Activated CD4-positive, alpha-beta T cell treated with anti-CD3 and anti-CD28 coated beads for 36 hours (primary cell): ENCODE measurements at regions of chr19 and their contacts with region 1.

Region 1: GRCh38 chr19:21505459-21506451 is at the start of gene ZNF429:
- DNase-seq: peak; percentile 94
- ATAC-seq: peak; percentile 99
- H3K4me3 Mint-ChIP-seq: peak within 1 kb of the TSS; percentile 100
- H3K27ac Mint-ChIP-seq: peak within 1 kb of the TSS; percentile 99
- H3K4me1 Mint-ChIP-seq: peaks cover 38% of the 10 kb centered on the region
- H3K27me3 Mint-ChIP-seq: no peaks in the 10 kb centered on the region
- total RNA-seq, gene ZNF429: 13.3 to 15.5 TPM

Region 2: GRCh38 chr19:20039203-20039723 is 1466.5 kb before region 1 on chr19 and contains the start of gene ZNF682:
- CTCF ChIA-PET with region 1: no interaction called
- POLR2A ChIA-PET with region 1: no interaction called
- intact Hi-C with region 1: loop called in 1 of 2 experiments (anchors 10 kb)
- DNase-seq: peak; percentile 98
- ATAC-seq: peak; percentile 100
- H3K4me3 Mint-ChIP-seq: peak within 1 kb of the TSS; percentile 94
- H3K27ac Mint-ChIP-seq: peak within 1 kb of the TSS; percentile 94
- H3K4me1 Mint-ChIP-seq: peaks cover 16% of the 10 kb centered on the region
- H3K27me3 Mint-ChIP-seq: peaks cover 5% of the 10 kb centered on the region
- total RNA-seq, gene ZNF682: 6.0 to 7.5 TPM

Region 3: DNA sequence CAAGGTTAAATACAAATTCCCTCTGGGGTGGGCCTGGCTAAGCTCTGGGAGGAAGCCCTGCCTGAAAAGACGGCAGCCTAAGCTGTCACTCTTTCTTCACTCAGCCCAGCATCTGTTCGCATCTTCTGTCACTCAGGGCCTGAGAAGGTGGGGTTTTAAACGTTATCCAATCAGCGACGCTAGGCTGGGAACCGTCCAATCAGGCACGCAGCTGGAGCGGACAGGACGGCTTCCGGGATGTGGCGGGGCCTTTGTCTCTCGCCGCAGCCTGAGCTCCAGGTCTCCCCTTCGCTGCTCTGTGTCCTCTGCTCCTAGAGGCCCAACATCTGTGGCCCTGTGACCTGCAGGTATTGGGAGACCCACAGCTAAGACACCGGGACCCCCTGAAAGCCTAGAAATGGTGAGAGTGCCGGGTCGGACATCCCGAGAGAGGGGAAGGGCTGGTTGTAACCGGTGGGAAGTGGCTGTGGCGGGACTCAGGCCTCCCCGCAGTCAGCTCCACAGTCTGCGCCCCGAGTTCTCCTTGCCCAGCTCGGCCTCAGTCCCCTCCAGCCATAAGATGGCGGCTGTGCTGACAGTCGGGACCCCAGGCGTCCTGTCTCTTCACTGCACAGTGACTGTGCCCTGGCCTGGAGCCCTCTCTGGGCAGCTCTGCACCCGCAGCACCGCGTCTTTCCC is 363.8 kb before region 1 on chr19 and contains the start of gene ZNF431:
- CTCF ChIA-PET with region 1: no interaction called
- POLR2A ChIA-PET with region 1: no interaction called
- intact Hi-C with region 1: loop called in 1 of 2 experiments (anchors 1 kb)
- DNase-seq: peak; percentile 94
- ATAC-seq: peak; percentile 99
- H3K4me3 Mint-ChIP-seq: peak within 1 kb of the TSS; percentile 95
- H3K27ac Mint-ChIP-seq: peak within 1 kb of the TSS; percentile 96
- H3K4me1 Mint-ChIP-seq: peaks cover 38% of the 10 kb centered on the region
- H3K27me3 Mint-ChIP-seq: no peaks in the 10 kb centered on the region
- total RNA-seq, gene ZNF431: 16.8 to 22.2 TPM

Region 4: GRCh38 chr19:21358768-21359451 is 146.8 kb before region 1 on chr19 and contains the start of gene ZNF738:
- CTCF ChIA-PET with region 1: no interaction called
- POLR2A ChIA-PET with region 1: no interaction called
- intact Hi-C with region 1: loop called in 1 of 2 experiments (anchors 1 kb)
- DNase-seq: peak; percentile 94
- ATAC-seq: peak; percentile 98
- H3K4me3 Mint-ChIP-seq: peak within 1 kb of the TSS; percentile 99
- H3K27ac Mint-ChIP-seq: peak within 1 kb of the TSS; percentile 99
- H3K4me1 Mint-ChIP-seq: peaks cover 10% of the 10 kb centered on the region
- H3K27me3 Mint-ChIP-seq: no peaks in the 10 kb centered on the region
- total RNA-seq, gene ZNF738: 15.8 to 19.5 TPM

Region 5: GRCh38 chr19:21410166-21410565 is 95.6 kb before region 1 on chr19:
- CTCF ChIA-PET with region 1: no interaction called
- POLR2A ChIA-PET with region 1: no interaction called
- intact Hi-C with region 1: no loop called
- DNase-seq: no peak
- ATAC-seq: no peak
- H3K4me3 Mint-ChIP-seq: no peak overlapping the region
- H3K27ac Mint-ChIP-seq: no peak overlapping the region
- H3K4me1 Mint-ChIP-seq: no peaks in the 10 kb centered on the region
- H3K27me3 Mint-ChIP-seq: no peaks in the 10 kb centered on the region

Region 6: DNA sequence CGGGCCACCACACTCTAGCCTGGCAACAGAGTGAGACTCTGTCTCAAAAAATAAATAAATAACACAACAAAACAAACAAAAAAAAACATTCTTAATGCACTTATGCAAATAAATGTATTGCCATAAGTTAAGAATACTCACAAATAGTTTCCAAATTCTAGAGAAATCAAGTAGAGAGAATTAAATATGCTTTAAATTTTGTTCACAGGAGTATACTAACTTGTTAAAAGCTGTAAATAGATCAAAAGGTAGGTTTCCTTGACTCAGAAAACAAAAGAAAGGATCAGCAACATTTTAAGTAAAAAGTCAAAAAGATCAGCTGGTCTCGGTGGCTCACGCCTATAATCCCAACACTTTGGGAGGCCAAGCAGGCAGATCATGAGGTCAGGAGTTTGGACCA is 50.9 kb before region 1 on chr19:
- CTCF ChIA-PET with region 1: no interaction called
- POLR2A ChIA-PET with region 1: no interaction called
- intact Hi-C with region 1: no loop called
- DNase-seq: no peak
- ATAC-seq: no peak
- H3K4me3 Mint-ChIP-seq: no peak overlapping the region
- H3K27ac Mint-ChIP-seq: no peak overlapping the region
- H3K4me1 Mint-ChIP-seq: no peaks in the 10 kb centered on the region
- H3K27me3 Mint-ChIP-seq: no peaks in the 10 kb centered on the region

Region 7: DNA sequence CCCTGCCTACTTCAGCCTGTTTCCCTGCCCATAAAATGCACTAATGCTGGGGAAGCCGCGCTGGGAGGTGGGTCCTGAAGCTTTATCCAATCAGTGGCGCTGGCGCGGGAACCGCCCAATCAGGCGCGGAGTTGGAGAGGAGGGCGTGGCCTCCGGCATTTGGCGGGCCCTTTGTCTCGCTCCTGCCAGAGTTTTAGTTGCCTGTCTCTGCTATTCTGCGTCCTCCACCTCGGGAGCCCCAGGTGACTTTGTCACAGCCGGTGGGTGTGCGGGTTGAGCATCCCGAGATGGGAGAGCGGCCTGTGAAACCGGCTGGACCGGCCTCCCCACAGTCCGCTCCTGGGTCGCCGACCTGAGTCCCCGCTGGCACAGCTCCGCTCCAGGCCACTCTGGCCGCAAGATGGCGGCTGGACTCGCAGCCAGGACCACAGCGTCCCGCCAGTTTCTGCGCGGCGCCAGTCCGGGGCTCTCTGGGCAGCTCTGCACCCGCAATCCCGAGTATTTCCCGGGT is 31.0 kb before region 1 on chr19:
- CTCF ChIA-PET with region 1: no interaction called
- POLR2A ChIA-PET with region 1: interaction called, 6 read pairs
- intact Hi-C with region 1: loop called in 1 of 2 experiments (anchors 2 kb)
- DNase-seq: peak; percentile 93
- ATAC-seq: peak; percentile 100
- H3K4me3 Mint-ChIP-seq: peak overlapping the region; percentile 77
- H3K27ac Mint-ChIP-seq: peak overlapping the region; percentile 65
- H3K4me1 Mint-ChIP-seq: no peaks in the 10 kb centered on the region
- H3K27me3 Mint-ChIP-seq: no peaks in the 10 kb centered on the region

Region 8: GRCh38 chr19:21677696-21678418 is 172.1 kb after region 1 on chr19:
- CTCF ChIA-PET with region 1: no interaction called
- POLR2A ChIA-PET with region 1: no interaction called
- intact Hi-C with region 1: loop called in 1 of 2 experiments (anchors 5 kb)
- DNase-seq: peak; percentile 55
- ATAC-seq: peak; percentile 75
- H3K4me3 Mint-ChIP-seq: peak overlapping the region; percentile 58
- H3K27ac Mint-ChIP-seq: peak overlapping the region; percentile 67
- H3K4me1 Mint-ChIP-seq: peaks cover 5% of the 10 kb centered on the region
- H3K27me3 Mint-ChIP-seq: peaks cover 4% of the 10 kb centered on the region

Region 9: GRCh38 chr19:21812450-21812849 is 306.7 kb after region 1 on chr19:
- CTCF ChIA-PET with region 1: no interaction called
- POLR2A ChIA-PET with region 1: no interaction called
- intact Hi-C with region 1: no loop called
- DNase-seq: no peak
- ATAC-seq: no peak
- H3K4me3 Mint-ChIP-seq: no peak overlapping the region
- H3K27ac Mint-ChIP-seq: no peak overlapping the region
- H3K4me1 Mint-ChIP-seq: no peaks in the 10 kb centered on the region
- H3K27me3 Mint-ChIP-seq: no peaks in the 10 kb centered on the region

Region 10: GRCh38 chr19:21835810-21836444 is 330.2 kb after region 1 on chr19 and contains the start of gene ZNF43:
- CTCF ChIA-PET with region 1: no interaction called
- POLR2A ChIA-PET with region 1: interaction called, 3 read pairs
- intact Hi-C with region 1: loop called (anchors 2 to 10 kb)
- DNase-seq: peak; percentile 96
- ATAC-seq: peak; percentile 97
- H3K4me3 Mint-ChIP-seq: peak within 1 kb of the TSS; percentile 99
- H3K27ac Mint-ChIP-seq: peak within 1 kb of the TSS; percentile 100
- H3K4me1 Mint-ChIP-seq: peaks cover 35% of the 10 kb centered on the region
- H3K27me3 Mint-ChIP-seq: no peaks in the 10 kb centered on the region
- total RNA-seq, gene ZNF43: 31.7 to 38.6 TPM